GM13976 (cell line): ENCODE measurements at regions of chr16 and their contacts with region 1.

Region 1: DNA sequence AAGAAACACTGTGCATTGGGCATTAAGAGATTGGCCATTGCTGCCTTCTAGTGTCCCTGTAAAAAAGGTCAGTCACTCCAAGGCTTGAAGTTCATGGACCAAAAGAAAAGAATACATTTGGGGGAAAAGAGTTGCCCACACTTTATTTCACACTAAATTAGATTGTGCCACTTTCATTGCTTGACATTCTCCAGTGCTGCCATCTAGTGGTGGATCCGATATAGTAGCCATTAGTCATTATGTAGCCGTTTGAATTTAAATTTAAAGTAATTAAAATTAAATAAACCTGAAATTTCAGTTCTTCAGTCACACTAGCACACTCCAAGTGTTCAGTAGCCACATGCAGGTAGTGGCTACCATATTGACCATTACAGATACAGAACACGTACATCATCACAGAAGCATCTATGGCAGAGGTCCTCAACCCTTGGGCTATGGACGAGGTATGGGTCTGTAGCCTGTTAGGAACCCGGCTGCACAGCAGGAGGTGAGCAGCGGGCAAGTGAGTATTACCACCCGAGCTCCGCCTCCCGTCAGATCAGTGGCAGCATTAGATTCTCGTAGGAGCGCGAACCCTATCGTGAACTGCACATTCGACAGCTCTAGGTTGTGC is 21.9 kb upstream of the CDH5 start:
- DNase-seq: no peak
- CTCF ChIP-seq: peak; percentile 56

Region 2: GRCh38 chr16:66247516-66248481 is 96.8 kb before region 1 on chr16:
- in situ Hi-C with region 1: loop called (anchors 25 kb)
- DNase-seq: no peak
- CTCF ChIP-seq: no peak

Region 3: DNA sequence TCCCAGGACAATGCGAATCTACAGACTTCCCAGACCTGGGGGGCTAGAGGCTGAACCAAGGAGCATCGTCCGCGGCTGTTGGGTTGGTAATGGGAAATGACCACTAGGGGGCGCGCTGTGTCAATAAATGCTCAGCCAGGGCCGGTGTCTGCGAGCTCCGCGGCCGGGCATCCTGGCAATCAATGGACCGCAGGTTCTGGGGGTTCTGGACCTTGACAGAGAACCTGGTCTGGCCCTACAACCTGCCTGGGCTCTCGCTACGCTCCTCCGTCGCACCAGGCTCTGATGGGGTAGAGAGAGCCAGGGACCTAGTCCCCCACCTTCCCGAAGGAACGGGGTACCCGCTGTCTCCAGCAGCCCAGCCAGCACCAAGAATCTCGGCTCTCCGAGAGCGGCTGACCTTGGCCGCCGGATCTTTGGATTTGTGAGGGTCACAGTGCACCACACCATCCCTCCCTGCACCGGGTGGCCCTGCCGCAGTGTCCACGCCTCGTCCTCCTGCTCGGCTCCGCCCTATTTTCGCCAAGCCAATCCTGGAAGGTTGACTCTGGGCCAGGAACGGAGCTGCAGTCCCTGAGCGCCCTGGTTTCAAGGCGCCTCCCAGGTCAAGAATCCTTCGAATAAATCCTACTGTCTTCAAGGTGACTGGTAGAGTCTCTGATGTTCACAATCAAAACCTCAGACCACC is 62.0 kb after region 1 on chr16:
- in situ Hi-C with region 1: no loop called
- DNase-seq: peak; percentile 90
- CTCF ChIP-seq: peak; percentile 83